ENCODE measurements at regions of chr3 and their contacts with region 1.

Region 1: GRCh38 chr3:172749221-172749965 is 1.1 kb upstream of the ECT2 start:
- DNase-seq: peak in 1 of 14 experiments; percentile 7
- ATAC-seq: no peak
- H3K4me3 ChIP-seq: peak overlapping the region; percentile 85
- H3K4me3 Mint-ChIP-seq: peak overlapping the region; percentile 97
- H3K27ac ChIP-seq: no peak overlapping the region
- H3K27ac Mint-ChIP-seq: peak overlapping the region; percentile 13
- H3K4me1 ChIP-seq: peaks cover 10% of the 10 kb centered on the region
- H3K4me1 Mint-ChIP-seq: peaks cover 15% of the 10 kb centered on the region
- H3K27me3 ChIP-seq: no peaks in the 10 kb centered on the region
- H3K27me3 Mint-ChIP-seq: no peaks in the 10 kb centered on the region
- CTCF ChIP-seq: no peak

Region 2: GRCh38 chr3:172039436-172040077 is 709.8 kb before region 1 on chr3 and contains the start of gene FNDC3B:
- CTCF ChIA-PET with region 1: no interaction called
- POLR2A ChIA-PET with region 1: interaction called, 3 read pairs
- intact Hi-C with region 1: loop called in 1 of 2 experiments (anchors 5 kb)
- DNase-seq: peak; percentile 81 to 96 (median 88)
- ATAC-seq: peak; percentile 93
- H3K4me3 ChIP-seq: peak within 1 kb of the TSS; percentile 91
- H3K4me3 Mint-ChIP-seq: peak within 1 kb of the TSS; percentile 100
- H3K27ac ChIP-seq: peak within 1 kb of the TSS; percentile 71 to 86
- H3K27ac Mint-ChIP-seq: peak within 1 kb of the TSS; percentile 92
- H3K4me1 ChIP-seq: peaks cover 25% of the 10 kb centered on the region
- H3K4me1 Mint-ChIP-seq: peaks cover 53% of the 10 kb centered on the region
- H3K27me3 ChIP-seq: no peaks in the 10 kb centered on the region
- H3K27me3 Mint-ChIP-seq: peaks cover 5% of the 10 kb centered on the region
- CTCF ChIP-seq: no peak
- total RNA-seq, gene FNDC3B: 26.1 to 28.7 TPM

Region 3: GRCh38 chr3:172476347-172476746 is 273.0 kb before region 1 on chr3:
- CTCF ChIA-PET with region 1: no interaction called
- POLR2A ChIA-PET with region 1: no interaction called
- intact Hi-C with region 1: no loop called
- DNase-seq: peak in 2 of 14 experiments; percentile 9 to 12
- ATAC-seq: no peak
- H3K4me3 ChIP-seq: peak overlapping the region; percentile 50
- H3K4me3 Mint-ChIP-seq: peak overlapping the region; percentile 91
- H3K27ac ChIP-seq: no peak overlapping the region
- H3K27ac Mint-ChIP-seq: peak overlapping the region; percentile 80
- H3K4me1 ChIP-seq: no peaks in the 10 kb centered on the region
- H3K4me1 Mint-ChIP-seq: peaks cover 16% of the 10 kb centered on the region
- H3K27me3 ChIP-seq: peaks cover 0 to 4% of the 10 kb centered on the region in 2 experiments
- H3K27me3 Mint-ChIP-seq: no peaks in the 10 kb centered on the region
- CTCF ChIP-seq: no peak

Region 4: GRCh38 chr3:172713316-172713715 is 36.1 kb before region 1 on chr3:
- CTCF ChIA-PET with region 1: interaction called, 6 read pairs
- POLR2A ChIA-PET with region 1: interaction called, 5 read pairs
- intact Hi-C with region 1: loop called in 1 of 2 experiments (anchors 2 kb)
- DNase-seq: no peak
- ATAC-seq: no peak
- H3K4me3 ChIP-seq: no peak overlapping the region
- H3K4me3 Mint-ChIP-seq: peak overlapping the region; percentile 49
- H3K27ac ChIP-seq: no peak overlapping the region
- H3K27ac Mint-ChIP-seq: no peak overlapping the region
- H3K4me1 ChIP-seq: peaks cover 14% of the 10 kb centered on the region
- H3K4me1 Mint-ChIP-seq: peaks cover 20% of the 10 kb centered on the region
- H3K27me3 ChIP-seq: no peaks in the 10 kb centered on the region
- H3K27me3 Mint-ChIP-seq: no peaks in the 10 kb centered on the region
- CTCF ChIP-seq: no peak